ENCODE measurements at regions of chr17 and their contacts with region 1.

Region 1: GRCh38 chr17:72151565-72152391 is 31.0 kb downstream of the SOX9 start:
- DNase-seq: peak; percentile 19 to 59
- ATAC-seq: peak; percentile 52 to 89 (median 79)
- H3K4me3 ChIP-seq: no peak overlapping the region
- H3K27ac ChIP-seq: no peak overlapping the region
- H3K4me1 ChIP-seq: no peaks in the 10 kb centered on the region
- H3K27me3 ChIP-seq: peaks cover 0 to 3% (median 0%) of the 10 kb centered on the region in 3 donors
- CTCF ChIP-seq: no peak

Region 2: DNA sequence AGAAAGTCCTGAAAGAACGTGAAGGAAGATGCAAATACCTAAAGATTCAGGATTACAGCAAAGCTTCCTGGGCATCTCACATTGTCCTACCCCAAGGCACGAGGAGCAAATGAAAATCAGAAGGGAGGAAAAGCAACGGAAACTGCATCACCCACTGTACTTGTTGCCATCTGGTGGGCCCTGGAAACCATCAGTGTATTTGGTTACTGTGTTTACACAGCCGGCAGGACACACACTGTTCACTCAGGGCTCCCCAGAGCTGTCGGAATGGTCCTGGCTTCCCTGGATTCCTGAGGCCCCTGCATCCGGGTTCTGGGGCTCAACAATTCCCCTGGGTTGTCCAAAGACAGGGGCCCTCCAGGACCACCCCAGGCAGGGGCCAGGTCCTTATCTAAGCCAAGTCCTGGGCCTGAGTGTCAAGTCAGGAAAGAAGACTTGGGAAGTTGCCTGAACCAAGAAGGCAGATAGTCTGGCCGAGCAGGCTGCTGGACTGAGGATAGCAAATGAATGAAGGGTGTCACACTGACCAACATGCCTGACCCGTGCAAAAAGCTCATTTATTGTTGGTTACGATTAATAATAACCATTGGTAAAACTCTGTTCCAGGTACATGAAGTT is 21.8 kb after region 1 on chr17:
- intact Hi-C with region 1: no loop called
- DNase-seq: no peak
- ATAC-seq: no peak
- H3K4me3 ChIP-seq: no peak overlapping the region
- H3K27ac ChIP-seq: no peak overlapping the region
- H3K4me1 ChIP-seq: no peaks in the 10 kb centered on the region
- H3K27me3 ChIP-seq: peaks cover 0 to 15% (median 0%) of the 10 kb centered on the region in 3 donors
- CTCF ChIP-seq: no peak

Region 3: DNA sequence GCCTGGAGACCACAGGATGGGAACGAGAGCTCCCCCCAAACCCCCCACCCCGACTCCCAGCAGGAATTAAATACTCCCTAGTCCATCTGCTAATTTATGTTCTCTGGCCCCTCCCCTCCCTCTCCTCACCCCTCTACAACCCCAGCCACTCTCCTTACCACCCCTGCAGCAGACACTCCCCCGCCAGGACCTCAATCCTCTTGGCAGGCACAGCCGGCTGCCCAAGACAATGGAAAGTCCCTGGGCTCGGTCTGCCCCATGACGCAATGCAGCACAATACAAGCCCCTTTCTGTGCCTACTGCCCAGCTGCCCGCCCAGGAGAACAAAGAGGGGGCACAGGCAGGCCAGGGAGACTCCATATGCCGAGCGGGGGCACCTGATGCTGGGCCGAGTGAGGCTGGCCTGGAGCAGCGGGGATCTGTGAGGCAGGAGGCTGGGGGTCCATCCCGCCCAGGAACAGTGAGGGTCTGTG is 1190.3 kb after region 1 on chr17:
- intact Hi-C with region 1: loop called in 1 of 2 experiments (anchors 5 kb)
- DNase-seq: no peak
- ATAC-seq: peak; percentile 34 to 73 (median 56)
- H3K4me3 ChIP-seq: no peak overlapping the region
- H3K27ac ChIP-seq: no peak overlapping the region
- H3K4me1 ChIP-seq: peaks cover 3% of the 10 kb centered on the region
- H3K27me3 ChIP-seq: peaks cover 0 to 10% (median 0%) of the 10 kb centered on the region in 3 donors
- CTCF ChIP-seq: no peak